ENCODE measurements at regions of chr12 and their contacts with region 1.

Region 1: GRCh38 chr12:69341328-69341727 is 6.9 kb upstream of the LYZ start:
- DNase-seq: no peak
- H3K4me3 Mint-ChIP-seq: no peak overlapping the region
- H3K27ac Mint-ChIP-seq: no peak overlapping the region
- H3K4me1 Mint-ChIP-seq: no peaks in the 10 kb centered on the region
- H3K27me3 Mint-ChIP-seq: no peaks in the 10 kb centered on the region

Region 2: GRCh38 chr12:69821456-69822159 is 480.3 kb after region 1 on chr12:
- CTCF ChIA-PET with region 1: no interaction called
- intact Hi-C with region 1: no loop called
- DNase-seq: no peak
- H3K4me3 Mint-ChIP-seq: no peak overlapping the region
- H3K27ac Mint-ChIP-seq: no peak overlapping the region
- H3K4me1 Mint-ChIP-seq: no peaks in the 10 kb centered on the region
- H3K27me3 Mint-ChIP-seq: peaks cover 4% of the 10 kb centered on the region

Region 3: DNA sequence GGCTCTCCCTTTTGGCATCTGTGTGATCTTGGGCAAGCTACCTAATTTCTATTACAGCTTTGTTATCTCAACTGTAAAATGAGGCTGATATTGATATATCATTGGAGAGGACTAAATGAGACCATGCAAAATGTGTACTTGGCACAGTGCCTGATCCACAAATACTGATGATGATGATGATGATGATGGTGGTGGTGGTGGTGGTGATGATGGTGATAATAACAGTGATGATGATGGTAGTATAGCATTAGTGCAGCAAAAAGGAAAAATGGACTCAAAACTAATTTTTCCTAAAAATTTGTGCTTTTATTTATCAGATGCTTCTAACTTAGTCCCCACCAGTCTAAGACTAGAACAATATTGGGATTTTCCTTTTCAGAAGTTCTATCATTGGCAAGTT is 1095.5 kb after region 1 on chr12:
- CTCF ChIA-PET with region 1: no interaction called
- intact Hi-C with region 1: loop called (anchors 5 kb)
- DNase-seq: no peak
- H3K4me3 Mint-ChIP-seq: no peak overlapping the region
- H3K27ac Mint-ChIP-seq: no peak overlapping the region
- H3K4me1 Mint-ChIP-seq: no peaks in the 10 kb centered on the region
- H3K27me3 Mint-ChIP-seq: no peaks in the 10 kb centered on the region